ENCODE measurements at regions of chr3 and their contacts with region 1.

Region 1: GRCh38 chr3:114152519-114153151 is 26.2 kb downstream of the DRD3 start:
- DNase-seq: peak; percentile 61 to 83 (median 78)
- ATAC-seq: peak; percentile 97
- H3K4me3 ChIP-seq: peak overlapping the region; percentile 55
- H3K4me3 Mint-ChIP-seq: peak overlapping the region; percentile 37 to 73 (median 62)
- H3K27ac ChIP-seq: no peak overlapping the region
- H3K27ac Mint-ChIP-seq: peak overlapping the region in 2 of 9 donors; percentile 14 to 40
- H3K4me1 ChIP-seq: peaks cover 8 to 9% of the 10 kb centered on the region in 2 donors
- H3K4me1 Mint-ChIP-seq: peaks cover 0 to 12% (median 0%) of the 10 kb centered on the region in 7 donors
- H3K27me3 ChIP-seq: no peaks in the 10 kb centered on the region
- H3K27me3 Mint-ChIP-seq: no peaks in the 10 kb centered on the region

Region 2: DNA sequence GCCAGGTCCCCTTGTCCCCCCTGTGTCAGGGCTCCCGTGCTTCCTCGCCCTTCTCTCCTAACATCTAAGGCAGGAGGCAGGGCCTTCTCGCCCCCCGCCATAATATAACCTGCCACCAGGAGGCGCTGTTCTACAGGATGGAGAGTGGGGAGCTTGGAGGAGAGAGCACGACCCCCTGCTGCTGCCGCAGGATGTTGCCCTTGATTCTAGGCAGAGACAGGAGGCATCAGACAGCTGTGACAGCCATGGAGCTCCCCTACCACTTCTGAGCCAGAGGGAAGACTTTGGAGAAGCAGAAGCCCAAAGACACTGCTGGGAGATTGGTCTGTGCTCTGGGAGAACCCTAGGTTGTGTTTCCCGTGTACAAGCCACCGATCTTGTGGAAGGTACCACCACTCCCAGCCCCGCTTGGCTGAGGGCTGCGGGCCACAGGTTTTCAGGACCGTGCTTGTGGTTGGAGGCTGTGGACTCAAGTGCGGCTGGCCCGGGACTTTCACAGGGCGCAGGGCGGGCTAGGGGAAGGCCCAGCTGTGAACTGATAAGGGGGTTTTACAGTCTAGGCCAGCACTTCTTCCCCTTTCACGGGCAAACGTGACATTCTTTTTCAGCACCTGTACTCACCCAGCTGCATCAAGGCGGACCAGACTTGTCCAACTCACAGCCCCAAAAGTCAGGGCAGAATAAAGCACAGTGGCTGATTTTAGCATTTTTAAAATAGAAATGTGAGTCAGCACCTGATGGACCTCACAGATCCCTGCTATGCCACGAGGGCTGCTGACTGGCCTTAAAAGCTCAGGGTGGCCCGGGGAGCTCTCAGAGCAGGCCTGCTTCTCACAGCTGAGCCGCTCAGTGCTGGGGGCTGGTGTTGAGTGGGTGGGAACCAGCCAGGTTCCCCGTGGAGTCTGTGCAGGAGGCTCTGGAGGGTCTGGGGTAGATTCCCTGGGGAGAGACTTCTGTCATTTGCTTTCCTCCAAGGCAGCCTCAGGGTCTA is 138.6 kb after region 1 on chr3:
- CTCF ChIA-PET with region 1: interaction called, 8 read pairs
- POLR2A ChIA-PET with region 1: interaction called, 3 read pairs
- intact Hi-C with region 1: loop called (anchors 1 to 2 kb)
- DNase-seq: peak; percentile 61 to 85 (median 77)
- ATAC-seq: peak; percentile 88
- H3K4me3 ChIP-seq: peak overlapping the region; percentile 37
- H3K4me3 Mint-ChIP-seq: peak overlapping the region in 6 of 10 donors; percentile 7 to 66 (median 52)
- H3K27ac ChIP-seq: peak overlapping the region; percentile 51
- H3K27ac Mint-ChIP-seq: peak overlapping the region in 7 of 9 donors; percentile 27 to 80 (median 59)
- H3K4me1 ChIP-seq: peaks cover 4 to 42% of the 10 kb centered on the region in 2 donors
- H3K4me1 Mint-ChIP-seq: peaks cover 0 to 18% (median 5%) of the 10 kb centered on the region in 7 donors
- H3K27me3 ChIP-seq: no peaks in the 10 kb centered on the region
- H3K27me3 Mint-ChIP-seq: no peaks in the 10 kb centered on the region

Region 3: DNA sequence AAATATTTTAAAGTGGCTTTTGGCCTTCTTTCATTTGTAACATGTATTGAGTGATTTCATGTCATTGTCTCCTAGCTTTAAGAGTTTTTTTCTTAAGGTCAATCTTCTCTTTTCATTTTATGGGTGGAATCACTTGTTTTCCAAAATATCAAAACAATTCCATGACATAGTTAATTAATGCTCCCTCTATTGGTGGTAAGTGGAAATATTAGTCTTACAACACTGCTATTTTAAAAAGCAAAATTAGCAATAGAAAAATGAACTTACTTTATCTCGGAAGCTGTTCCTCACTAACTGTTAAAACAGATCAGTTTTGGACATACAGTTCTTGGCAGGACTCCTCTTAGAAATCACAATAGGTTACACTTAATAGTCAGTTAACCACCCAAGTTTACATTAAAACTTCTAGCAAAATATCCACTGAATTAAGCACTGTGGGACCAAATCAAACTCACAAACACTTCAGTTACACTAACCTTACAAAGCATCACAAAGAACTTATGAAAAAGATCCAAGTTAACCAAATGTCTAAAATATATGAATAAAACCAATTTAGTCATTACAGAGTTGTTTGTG is 183.6 kb after region 1 on chr3:
- CTCF ChIA-PET with region 1: interaction called, 11 read pairs
- POLR2A ChIA-PET with region 1: no interaction called
- intact Hi-C with region 1: loop called in 1 of 2 experiments (anchors 1 kb)
- DNase-seq: peak in 2 of 9 donors; percentile 2 to 4
- ATAC-seq: no peak
- H3K4me3 ChIP-seq: no peak overlapping the region
- H3K4me3 Mint-ChIP-seq: no peak overlapping the region
- H3K27ac ChIP-seq: no peak overlapping the region
- H3K27ac Mint-ChIP-seq: peak overlapping the region in 1 of 9 donors; percentile 9
- H3K4me1 ChIP-seq: peaks cover 0 to 38% of the 10 kb centered on the region in 2 donors
- H3K4me1 Mint-ChIP-seq: peaks cover 0 to 25% (median 4%) of the 10 kb centered on the region in 7 donors
- H3K27me3 ChIP-seq: no peaks in the 10 kb centered on the region
- H3K27me3 Mint-ChIP-seq: no peaks in the 10 kb centered on the region

Region 4: GRCh38 chr3:114383875-114384557 is 231.4 kb after region 1 on chr3:
- CTCF ChIA-PET with region 1: interaction called, 4 read pairs
- POLR2A ChIA-PET with region 1: no interaction called
- intact Hi-C with region 1: loop called in 1 of 2 experiments (anchors 1 kb)
- DNase-seq: peak; percentile 7 to 58 (median 37)
- ATAC-seq: peak; percentile 96
- H3K4me3 ChIP-seq: peak overlapping the region; percentile 57
- H3K4me3 Mint-ChIP-seq: peak overlapping the region in 8 of 10 donors; percentile 60 to 88 (median 77)
- H3K27ac ChIP-seq: no peak overlapping the region
- H3K27ac Mint-ChIP-seq: peak overlapping the region in 5 of 9 donors; percentile 27 to 73 (median 56)
- H3K4me1 ChIP-seq: peaks cover 0 to 7% of the 10 kb centered on the region in 2 donors
- H3K4me1 Mint-ChIP-seq: peaks cover 0 to 23% (median 12%) of the 10 kb centered on the region in 7 donors
- H3K27me3 ChIP-seq: no peaks in the 10 kb centered on the region
- H3K27me3 Mint-ChIP-seq: no peaks in the 10 kb centered on the region

Region 5: DNA sequence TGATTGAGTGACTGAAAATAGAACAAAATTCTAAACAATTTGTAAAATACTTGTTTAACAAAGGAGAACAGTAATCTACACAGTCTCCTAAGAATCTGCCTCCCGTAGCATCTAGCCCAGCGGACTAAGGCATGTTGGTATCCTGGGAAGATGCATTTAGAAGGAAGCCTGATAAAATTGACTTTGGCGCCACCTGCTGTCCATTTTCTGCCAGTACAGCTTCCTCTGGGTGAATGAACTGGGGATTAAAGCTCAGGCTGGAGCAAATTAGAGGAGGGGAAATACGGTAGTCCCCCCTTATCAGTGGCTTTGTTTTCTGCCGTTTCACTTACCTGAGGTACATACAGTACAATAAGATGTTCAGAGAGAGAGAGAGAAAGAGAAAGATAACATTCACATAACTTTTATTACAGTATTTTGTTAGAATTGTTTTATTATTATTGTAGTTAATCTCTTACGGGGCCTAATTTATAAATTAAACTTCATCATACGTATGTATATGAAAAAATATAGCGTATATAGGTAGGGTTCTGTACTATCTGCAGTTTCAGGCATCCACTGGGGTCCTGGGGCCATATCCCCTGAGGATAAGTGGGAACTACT is 1662.2 kb after region 1 on chr3:
- CTCF ChIA-PET with region 1: no interaction called
- POLR2A ChIA-PET with region 1: no interaction called
- intact Hi-C with region 1: loop called in 1 of 2 experiments (anchors 5 kb)
- DNase-seq: peak; percentile 21 to 65 (median 46)
- ATAC-seq: peak; percentile 61
- H3K4me3 ChIP-seq: no peak overlapping the region
- H3K4me3 Mint-ChIP-seq: no peak overlapping the region
- H3K27ac ChIP-seq: no peak overlapping the region
- H3K27ac Mint-ChIP-seq: peak overlapping the region in 1 of 9 donors; percentile 69
- H3K4me1 ChIP-seq: no peaks in the 10 kb centered on the region
- H3K4me1 Mint-ChIP-seq: peaks cover 0 to 5% (median 0%) of the 10 kb centered on the region in 7 donors
- H3K27me3 ChIP-seq: no peaks in the 10 kb centered on the region
- H3K27me3 Mint-ChIP-seq: peaks cover 0 to 31% (median 12%) of the 10 kb centered on the region in 5 donors